HCT116 (cell line): ENCODE measurements at regions of chr6 and their contacts with region 1.

Region 1: DNA sequence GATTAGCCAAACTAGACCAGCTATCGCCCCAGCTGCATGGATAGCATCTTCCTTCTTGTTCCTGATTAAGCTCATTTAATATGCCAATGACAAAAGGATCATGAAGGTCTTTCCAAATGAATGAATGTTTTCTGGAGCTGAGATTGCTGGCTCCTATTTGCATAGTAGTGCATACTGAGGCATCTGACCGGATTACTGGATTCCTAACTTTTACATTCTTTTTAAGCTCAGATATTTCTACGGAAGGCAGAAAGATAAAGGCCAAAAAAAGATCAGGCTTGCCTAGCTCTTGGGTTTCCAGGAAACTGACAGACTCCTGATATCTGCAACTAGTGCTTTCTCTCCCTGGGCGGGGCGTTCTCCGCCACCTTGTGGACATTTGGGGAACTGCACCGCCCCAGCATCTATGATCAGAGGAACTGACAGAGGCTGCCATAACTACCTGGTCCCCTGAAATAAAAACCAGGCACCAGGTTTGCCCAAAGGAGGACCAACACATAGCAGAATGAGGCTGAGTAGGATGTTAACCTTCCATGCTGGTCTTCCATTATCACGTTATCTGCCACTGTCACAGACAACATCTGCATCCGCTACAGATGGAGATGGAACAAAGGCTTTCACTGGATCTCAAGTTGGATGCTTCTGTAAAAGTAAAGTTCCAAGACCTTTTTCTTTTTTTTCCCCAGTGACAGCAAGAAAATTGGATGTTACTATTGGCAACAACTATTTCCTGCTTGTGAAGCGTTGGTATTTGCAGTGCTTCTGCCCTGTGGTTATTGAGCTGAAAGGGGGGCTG is 33.2 kb downstream of the NT5E start:
- DNase-seq: no peak
- ATAC-seq: peak; percentile 95
- H3K4me3 ChIP-seq: no peak overlapping the region
- H3K27ac ChIP-seq: no peak overlapping the region
- H3K4me1 ChIP-seq: peaks cover 0 to 23% of the 10 kb centered on the region in 2 experiments; a peak in 2 of 4 replicates
- H3K27me3 ChIP-seq: no peaks in the 10 kb centered on the region
- CTCF ChIP-seq: peak; percentile 71 to 100 (median 99); a peak in 5 of 6 replicates
- POLR2A ChIP-seq: no peak
- RAD21 ChIP-seq: peak; percentile 93

Region 2: GRCh38 chr6:84764332-84765049 is 718.6 kb before region 1 on chr6 and contains the start of gene TBX18:
- CTCF ChIA-PET with region 1: no interaction called
- POLR2A ChIA-PET with region 1: no interaction called
- RAD21 ChIA-PET with region 1: no interaction called
- intact Hi-C with region 1: no loop called
- DNase-seq: peak; percentile 85
- ATAC-seq: peak; percentile 82
- H3K4me3 ChIP-seq: peak within 1 kb of the TSS; percentile 53 to 68
- H3K27ac ChIP-seq: peak within 1 kb of the TSS; percentile 82
- H3K4me1 ChIP-seq: peaks cover 0 to 13% of the 10 kb centered on the region in 2 experiments; a peak in 2 of 4 replicates
- H3K27me3 ChIP-seq: no peaks in the 10 kb centered on the region
- CTCF ChIP-seq: no peak
- POLR2A ChIP-seq: no peak
- RAD21 ChIP-seq: no peak
- total RNA-seq, gene TBX18: 14.4 TPM

Region 3: DNA sequence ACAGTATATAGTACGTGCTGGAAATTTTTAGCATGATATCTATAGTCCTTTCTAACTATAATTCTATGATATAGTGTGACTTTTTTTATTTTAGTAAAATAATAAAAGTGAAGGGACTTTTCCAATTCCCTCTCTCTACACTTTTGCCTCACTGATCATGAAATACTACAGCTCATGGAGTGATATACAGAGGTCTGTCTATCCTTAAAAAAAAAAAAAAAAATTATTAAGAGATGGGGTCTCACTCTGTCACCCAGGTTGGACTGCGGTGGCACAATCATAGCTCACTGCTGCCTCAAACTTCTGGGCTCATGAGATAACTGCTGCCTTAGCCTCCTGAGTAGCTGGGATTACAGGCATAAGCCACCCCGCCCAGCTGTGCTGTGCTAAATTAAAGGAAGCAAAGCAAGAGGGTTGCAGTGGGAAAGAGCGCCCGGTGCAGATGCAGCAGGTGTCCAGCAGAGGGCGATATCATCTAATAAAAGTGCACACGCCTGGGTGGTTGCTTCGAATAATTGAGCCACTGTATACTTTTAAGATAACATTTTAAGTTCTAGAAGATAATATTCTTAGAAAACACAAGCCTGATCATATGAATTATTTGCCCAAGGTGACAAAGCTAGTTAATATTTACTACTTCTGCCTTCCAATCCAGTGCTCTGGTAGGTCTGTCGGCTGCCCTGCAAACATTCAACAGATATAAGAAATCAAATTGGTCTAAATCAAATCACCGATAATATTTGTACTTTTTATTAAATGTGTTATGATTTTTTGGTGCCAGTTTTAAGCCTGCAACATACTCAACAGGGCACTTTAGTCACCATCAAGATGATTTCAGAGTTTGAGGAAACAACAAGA is 128.1 kb before region 1 on chr6:
- CTCF ChIA-PET with region 1: interaction called, 47 read pairs
- POLR2A ChIA-PET with region 1: interaction called, 3 read pairs
- RAD21 ChIA-PET with region 1: interaction called, 5 to 7 read pairs
- intact Hi-C with region 1: loop called (anchors 1 kb)
- DNase-seq: peak; percentile 57
- ATAC-seq: peak; percentile 94
- H3K4me3 ChIP-seq: no peak overlapping the region
- H3K27ac ChIP-seq: no peak overlapping the region
- H3K4me1 ChIP-seq: peaks cover 0 to 34% of the 10 kb centered on the region in 2 experiments; a peak in 2 of 4 replicates
- H3K27me3 ChIP-seq: no peaks in the 10 kb centered on the region
- CTCF ChIP-seq: peak; percentile 90 to 93 (median 91)
- POLR2A ChIP-seq: no peak
- RAD21 ChIP-seq: peak; percentile 96

Region 4: DNA sequence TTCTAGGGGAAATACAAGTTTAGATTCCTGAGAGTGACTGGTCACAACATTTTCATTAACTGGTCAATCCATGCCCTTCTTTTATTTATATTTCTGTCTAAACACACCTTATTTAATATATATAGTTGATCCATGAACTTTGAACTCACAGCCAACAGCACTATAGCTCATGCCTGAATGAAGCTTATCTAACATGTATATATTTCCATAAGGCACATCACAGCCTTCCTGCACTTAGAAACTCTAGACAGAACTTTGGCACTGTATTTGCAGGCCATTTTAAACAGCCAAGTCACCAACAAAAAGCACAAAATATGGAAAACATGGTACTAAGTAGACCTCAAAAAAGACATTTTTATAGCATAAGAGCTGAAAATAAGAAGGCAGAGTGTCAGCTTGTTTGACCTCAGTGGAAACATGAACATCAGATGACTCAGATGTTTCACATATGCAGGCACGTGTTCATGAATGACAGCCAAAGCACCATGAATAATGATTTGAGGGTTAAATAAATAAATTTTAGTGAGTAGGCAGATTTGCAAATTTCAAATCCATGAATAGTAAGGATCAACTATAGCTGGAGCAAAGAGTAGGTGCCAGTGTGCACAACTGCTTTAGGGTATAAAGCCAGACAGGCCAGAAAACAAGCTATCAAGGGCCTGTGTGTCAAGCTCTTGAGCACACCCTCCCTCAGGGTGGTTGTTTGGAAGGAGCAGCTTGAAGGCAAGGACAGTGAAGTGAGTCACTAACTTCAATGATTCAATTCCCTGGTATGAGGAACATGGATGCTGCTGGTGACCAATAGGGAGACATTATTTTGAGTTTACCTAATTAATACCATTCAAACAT is 122.1 kb before region 1 on chr6:
- CTCF ChIA-PET with region 1: interaction called, 47 read pairs
- POLR2A ChIA-PET with region 1: interaction called, 3 read pairs
- RAD21 ChIA-PET with region 1: interaction called, 4 read pairs
- intact Hi-C with region 1: no loop called
- DNase-seq: peak; percentile 94
- ATAC-seq: peak; percentile 94
- H3K4me3 ChIP-seq: no peak overlapping the region
- H3K27ac ChIP-seq: peak overlapping the region; percentile 34
- H3K4me1 ChIP-seq: peaks cover 19 to 70% of the 10 kb centered on the region in 2 experiments
- H3K27me3 ChIP-seq: no peaks in the 10 kb centered on the region
- CTCF ChIP-seq: no peak
- POLR2A ChIP-seq: no peak
- RAD21 ChIP-seq: peak; percentile 32; the same call in 1 of the 2 replicates

Region 5: GRCh38 chr6:85449818-85450759 is 33.0 kb before region 1 on chr6 and contains the start of gene NT5E:
- CTCF ChIA-PET with region 1: interaction called, 9 read pairs
- POLR2A ChIA-PET with region 1: interaction called, 3 read pairs
- RAD21 ChIA-PET with region 1: interaction called in 1 of 2 experiments, 7 read pairs
- intact Hi-C with region 1: loop called (anchors 2 kb)
- DNase-seq: no peak
- ATAC-seq: peak; percentile 90
- H3K4me3 ChIP-seq: peak within 1 kb of the TSS; percentile 86 to 92
- H3K27ac ChIP-seq: peak within 1 kb of the TSS; percentile 70
- H3K4me1 ChIP-seq: peaks cover 20 to 57% of the 10 kb centered on the region in 2 experiments; a peak in 3 of 4 replicates
- H3K27me3 ChIP-seq: no peaks in the 10 kb centered on the region
- CTCF ChIP-seq: no peak; a peak in 1 of 6 replicates
- POLR2A ChIP-seq: no peak
- RAD21 ChIP-seq: 0 out of 2 replicates have a peak, but pooled peaks have one; percentile 19
- total RNA-seq, gene NT5E: 68.2 TPM

Region 6: DNA sequence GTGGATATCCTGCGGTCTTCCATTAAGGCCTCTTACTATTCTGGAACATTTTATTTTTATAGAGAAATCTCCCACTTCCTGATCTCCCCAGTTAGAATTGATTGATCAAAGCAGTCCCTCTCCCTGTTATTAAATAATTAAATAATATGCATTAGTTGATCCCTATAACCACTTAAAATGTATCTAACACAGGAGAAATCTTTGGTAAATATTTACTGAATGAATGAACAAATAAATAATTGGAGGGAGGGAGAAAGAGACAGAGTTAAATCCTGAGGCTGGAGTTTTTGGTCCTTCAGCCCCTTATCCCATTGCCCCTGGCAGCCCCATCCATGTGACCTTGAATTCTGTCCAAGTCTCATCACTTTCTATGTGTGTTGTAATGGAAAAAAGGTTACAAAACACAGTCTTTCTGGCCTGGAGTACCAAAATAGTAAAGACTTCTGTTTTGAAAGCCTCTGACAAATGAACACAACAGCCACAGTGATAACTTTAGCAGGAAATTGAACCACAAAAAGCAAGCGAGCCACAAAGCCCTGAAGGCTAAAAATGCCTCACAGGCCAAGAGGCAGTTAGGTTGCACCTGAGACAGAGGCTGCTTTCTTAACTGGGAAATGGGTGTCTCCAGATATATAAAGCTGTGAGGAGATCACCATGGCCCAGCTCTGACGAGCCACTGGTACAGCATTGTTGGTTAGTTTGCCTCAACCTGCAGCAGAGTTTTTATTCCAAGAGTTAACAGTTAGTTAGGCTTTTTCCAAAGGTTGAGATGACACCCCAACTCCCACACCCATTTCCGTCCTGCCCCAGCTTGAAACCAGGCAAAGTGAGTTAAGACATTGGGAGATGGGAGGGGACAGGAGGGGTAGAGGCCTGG is 21.9 kb before region 1 on chr6:
- CTCF ChIA-PET with region 1: interaction called, 15 read pairs
- POLR2A ChIA-PET with region 1: interaction called, 7 read pairs
- RAD21 ChIA-PET with region 1: interaction called in 1 of 2 experiments, 3 read pairs
- intact Hi-C with region 1: no loop called
- DNase-seq: no peak
- ATAC-seq: no peak
- H3K4me3 ChIP-seq: no peak overlapping the region
- H3K27ac ChIP-seq: no peak overlapping the region
- H3K4me1 ChIP-seq: peaks cover 61 to 100% of the 10 kb centered on the region in 2 experiments
- H3K27me3 ChIP-seq: no peaks in the 10 kb centered on the region
- CTCF ChIP-seq: no peak
- POLR2A ChIP-seq: no peak
- RAD21 ChIP-seq: no peak

Region 7: DNA sequence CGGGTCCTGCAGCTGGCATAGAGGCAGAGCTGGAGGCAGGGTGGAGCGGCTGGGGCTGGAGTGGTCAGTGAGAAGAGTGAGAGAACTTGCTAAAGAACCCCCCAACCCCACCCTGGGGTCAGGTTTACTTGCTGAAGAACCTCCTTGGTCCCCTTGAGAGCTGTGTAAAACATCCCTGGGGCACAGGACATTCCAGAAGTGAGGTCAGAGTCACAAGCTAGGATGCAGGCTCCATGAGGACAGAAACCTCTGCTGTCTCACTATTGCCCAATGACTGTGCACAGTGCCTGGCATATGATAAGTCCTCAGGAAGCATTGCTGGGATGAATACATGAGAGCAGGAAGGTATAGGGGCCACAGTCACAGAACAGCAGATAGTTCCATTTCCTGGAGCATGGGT is 14.8 kb before region 1 on chr6:
- CTCF ChIA-PET with region 1: interaction called, 17 read pairs
- POLR2A ChIA-PET with region 1: interaction called, 9 read pairs
- RAD21 ChIA-PET with region 1: interaction called in 1 of 2 experiments, 3 read pairs
- intact Hi-C with region 1: no loop called
- DNase-seq: no peak
- ATAC-seq: no peak
- H3K4me3 ChIP-seq: no peak overlapping the region
- H3K27ac ChIP-seq: no peak overlapping the region
- H3K4me1 ChIP-seq: peaks cover 34 to 86% of the 10 kb centered on the region in 2 experiments
- H3K27me3 ChIP-seq: no peaks in the 10 kb centered on the region
- CTCF ChIP-seq: no peak
- POLR2A ChIP-seq: no peak
- RAD21 ChIP-seq: no peak

Region 8: GRCh38 chr6:85715797-85716196 is 232.7 kb after region 1 on chr6:
- CTCF ChIA-PET with region 1: no interaction called
- POLR2A ChIA-PET with region 1: no interaction called
- RAD21 ChIA-PET with region 1: no interaction called
- intact Hi-C with region 1: no loop called
- DNase-seq: no peak
- ATAC-seq: no peak
- H3K4me3 ChIP-seq: no peak overlapping the region
- H3K27ac ChIP-seq: no peak overlapping the region
- H3K4me1 ChIP-seq: no peaks in the 10 kb centered on the region
- H3K27me3 ChIP-seq: no peaks in the 10 kb centered on the region
- CTCF ChIP-seq: no peak
- POLR2A ChIP-seq: no peak
- RAD21 ChIP-seq: no peak

Region 9: DNA sequence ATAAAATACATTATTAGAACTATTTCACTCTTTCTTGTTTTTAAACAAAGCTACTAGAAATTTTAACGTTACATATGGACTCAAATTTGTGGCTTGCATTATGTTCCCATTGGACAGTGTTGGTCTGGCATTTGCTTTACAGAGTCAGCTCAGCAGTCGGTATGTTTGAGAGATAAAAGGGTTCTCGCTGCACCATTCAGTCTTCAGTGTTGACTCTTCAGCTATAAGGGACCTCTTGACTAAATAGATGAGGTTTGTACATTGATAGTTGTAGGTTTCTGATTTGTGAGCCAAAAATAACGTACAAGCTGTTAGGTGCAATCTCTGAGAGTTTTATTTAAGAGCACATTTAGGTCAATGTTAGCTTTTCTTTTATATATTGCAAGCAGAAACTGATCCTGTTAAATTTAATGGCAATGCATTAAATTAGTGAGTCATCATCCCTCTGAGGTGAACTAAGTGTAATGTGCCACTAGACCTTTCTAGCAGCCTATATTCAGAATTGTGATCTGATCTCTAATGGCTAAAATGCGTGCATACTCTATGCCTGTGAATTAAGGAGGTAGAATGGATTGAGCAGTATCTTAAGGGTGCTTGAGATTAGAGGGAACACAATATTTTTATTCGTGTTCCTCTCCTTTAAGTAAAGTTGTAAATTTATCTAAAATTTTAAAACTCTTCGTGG is 645.2 kb after region 1 on chr6:
- CTCF ChIA-PET with region 1: no interaction called
- POLR2A ChIA-PET with region 1: no interaction called
- RAD21 ChIA-PET with region 1: no interaction called
- intact Hi-C with region 1: no loop called
- DNase-seq: no peak
- ATAC-seq: no peak
- H3K4me3 ChIP-seq: no peak overlapping the region
- H3K27ac ChIP-seq: no peak overlapping the region
- H3K4me1 ChIP-seq: no peaks in the 10 kb centered on the region
- H3K27me3 ChIP-seq: 0 out of 2 replicates have a peak, but pooled peaks cover 3% of the 10 kb centered on the region
- CTCF ChIP-seq: no peak
- POLR2A ChIP-seq: no peak
- RAD21 ChIP-seq: no peak